ENCODE measurements at regions of chr19 and their contacts with region 1.

Region 1: DNA sequence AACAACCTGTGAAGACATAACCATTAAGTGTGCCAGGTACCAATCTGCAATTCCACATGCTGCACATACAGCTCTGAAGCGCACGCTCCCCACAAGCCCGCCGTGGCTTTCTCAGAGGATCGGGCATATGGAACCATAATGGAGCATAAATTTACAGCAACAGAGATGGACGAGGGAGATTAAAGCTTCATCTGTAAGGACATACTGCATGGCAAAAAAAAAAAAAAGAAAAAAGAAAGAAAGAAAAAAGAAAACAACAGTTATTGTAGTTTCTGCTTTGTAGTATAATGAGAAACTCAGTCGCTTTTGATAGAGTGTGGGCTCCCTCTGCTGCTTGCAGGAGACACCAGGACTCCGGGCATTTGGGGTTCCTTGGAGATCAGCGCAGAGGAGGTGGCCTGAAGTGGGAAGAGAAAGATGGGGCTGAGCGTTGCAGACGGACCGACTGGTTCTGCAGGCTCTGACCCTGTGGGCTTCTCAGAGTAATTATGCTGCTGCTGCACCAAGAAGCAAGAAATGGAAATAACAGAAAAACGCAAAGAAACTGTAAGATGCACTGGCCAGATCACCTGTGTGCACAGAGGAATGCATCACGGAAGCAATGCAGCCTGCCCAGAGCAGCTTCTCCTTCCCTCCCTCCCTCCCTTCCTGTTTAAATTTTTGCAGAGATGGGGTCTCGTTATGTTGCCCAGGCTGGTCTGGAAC is 10.8 kb upstream of the PDCD5 start:
- DNase-seq: peak; percentile 68
- H3K4me3 Mint-ChIP-seq: no peak overlapping the region
- H3K27ac Mint-ChIP-seq: no peak overlapping the region
- H3K4me1 Mint-ChIP-seq: peaks cover 11% of the 10 kb centered on the region
- H3K27me3 Mint-ChIP-seq: peaks cover 46% of the 10 kb centered on the region
- CTCF ChIP-seq: peak; percentile 74

Region 2: GRCh38 chr19:30669329-30670010 is 1900.8 kb before region 1 on chr19:
- CTCF ChIA-PET with region 1: no interaction called
- intact Hi-C with region 1: loop called (anchors 2 kb)
- DNase-seq: peak; percentile 63
- H3K4me3 Mint-ChIP-seq: no peak overlapping the region
- H3K27ac Mint-ChIP-seq: no peak overlapping the region
- H3K4me1 Mint-ChIP-seq: no peaks in the 10 kb centered on the region
- H3K27me3 Mint-ChIP-seq: peaks cover 43% of the 10 kb centered on the region
- CTCF ChIP-seq: peak; percentile 67

Region 3: GRCh38 chr19:32287811-32288227 is 282.4 kb before region 1 on chr19:
- CTCF ChIA-PET with region 1: no interaction called
- intact Hi-C with region 1: loop called (anchors 2 kb)
- DNase-seq: peak; percentile 63
- H3K4me3 Mint-ChIP-seq: no peak overlapping the region
- H3K27ac Mint-ChIP-seq: no peak overlapping the region
- H3K4me1 Mint-ChIP-seq: no peaks in the 10 kb centered on the region
- H3K27me3 Mint-ChIP-seq: peaks cover 88% of the 10 kb centered on the region
- CTCF ChIP-seq: peak; percentile 31

Region 4: GRCh38 chr19:32339988-32340874 is 230.0 kb before region 1 on chr19:
- CTCF ChIA-PET with region 1: interaction called, 5 read pairs
- intact Hi-C with region 1: loop called (anchors 1 kb)
- DNase-seq: peak; percentile 74
- H3K4me3 Mint-ChIP-seq: no peak overlapping the region
- H3K27ac Mint-ChIP-seq: no peak overlapping the region
- H3K4me1 Mint-ChIP-seq: peaks cover 13% of the 10 kb centered on the region
- H3K27me3 Mint-ChIP-seq: peaks cover 20% of the 10 kb centered on the region
- CTCF ChIP-seq: peak; percentile 63

Region 5: DNA sequence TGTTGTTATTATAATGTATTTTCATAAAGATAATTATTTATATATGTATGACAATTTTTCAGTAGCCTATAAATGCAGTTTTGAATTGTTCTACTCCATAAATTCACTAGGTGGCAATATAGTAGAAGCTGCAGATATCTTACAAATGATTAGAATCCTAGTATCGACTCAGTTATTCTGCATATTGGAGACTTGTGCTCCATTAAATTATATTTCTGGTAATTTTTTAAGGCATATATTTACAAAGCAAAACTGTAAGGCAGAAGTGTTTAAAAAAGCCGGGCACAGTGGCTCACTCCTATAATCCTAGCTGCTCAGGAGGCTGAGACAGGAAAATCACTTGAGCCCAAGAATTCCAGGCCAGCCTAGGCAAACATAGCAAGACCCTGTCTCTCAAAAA is 106.0 kb before region 1 on chr19:
- CTCF ChIA-PET with region 1: no interaction called
- intact Hi-C with region 1: loop called (anchors 1 kb)
- DNase-seq: no peak
- H3K4me3 Mint-ChIP-seq: no peak overlapping the region
- H3K27ac Mint-ChIP-seq: no peak overlapping the region
- H3K4me1 Mint-ChIP-seq: no peaks in the 10 kb centered on the region
- H3K27me3 Mint-ChIP-seq: no peaks in the 10 kb centered on the region
- CTCF ChIP-seq: peak; percentile 13

Region 6: GRCh38 chr19:32599736-32600157 is 29.5 kb after region 1 on chr19:
- CTCF ChIA-PET with region 1: no interaction called
- intact Hi-C with region 1: no loop called
- DNase-seq: peak; percentile 57
- H3K4me3 Mint-ChIP-seq: no peak overlapping the region
- H3K27ac Mint-ChIP-seq: no peak overlapping the region
- H3K4me1 Mint-ChIP-seq: no peaks in the 10 kb centered on the region
- H3K27me3 Mint-ChIP-seq: no peaks in the 10 kb centered on the region
- CTCF ChIP-seq: peak; percentile 61

Region 7: GRCh38 chr19:32624410-32624809 is 54.2 kb after region 1 on chr19:
- CTCF ChIA-PET with region 1: no interaction called
- intact Hi-C with region 1: no loop called
- DNase-seq: no peak
- H3K4me3 Mint-ChIP-seq: no peak overlapping the region
- H3K27ac Mint-ChIP-seq: no peak overlapping the region
- H3K4me1 Mint-ChIP-seq: no peaks in the 10 kb centered on the region
- H3K27me3 Mint-ChIP-seq: no peaks in the 10 kb centered on the region
- CTCF ChIP-seq: no peak

Region 8: GRCh38 chr19:32674959-32675719 is 104.9 kb after region 1 on chr19 and contains the start of gene ANKRD27:
- CTCF ChIA-PET with region 1: no interaction called
- intact Hi-C with region 1: no loop called
- DNase-seq: peak; percentile 99
- H3K4me3 Mint-ChIP-seq: peak within 1 kb of the TSS; percentile 85
- H3K27ac Mint-ChIP-seq: peak within 1 kb of the TSS; percentile 79
- H3K4me1 Mint-ChIP-seq: peaks cover 22% of the 10 kb centered on the region
- H3K27me3 Mint-ChIP-seq: peaks cover 25% of the 10 kb centered on the region
- CTCF ChIP-seq: no peak
- total RNA-seq, gene ANKRD27: 40.8 and 41.2 TPM in 2 replicates